HCT116 (cell line): ENCODE measurements at regions of chr10 and their contacts with region 1.

Region 1: GRCh38 chr10:3239066-3239919 is 66.7 kb upstream of the PITRM1 start:
- DNase-seq: peak; percentile 45
- ATAC-seq: peak; percentile 96
- H3K4me3 ChIP-seq: no peak overlapping the region
- H3K27ac ChIP-seq: no peak overlapping the region
- H3K4me1 ChIP-seq: no peaks in the 10 kb centered on the region
- H3K27me3 ChIP-seq: no peaks in the 10 kb centered on the region
- CTCF ChIP-seq: peak; percentile 46 to 78 (median 70); a peak in 5 of 6 replicates
- POLR2A ChIP-seq: no peak
- RAD21 ChIP-seq: peak; percentile 97

Region 2: DNA sequence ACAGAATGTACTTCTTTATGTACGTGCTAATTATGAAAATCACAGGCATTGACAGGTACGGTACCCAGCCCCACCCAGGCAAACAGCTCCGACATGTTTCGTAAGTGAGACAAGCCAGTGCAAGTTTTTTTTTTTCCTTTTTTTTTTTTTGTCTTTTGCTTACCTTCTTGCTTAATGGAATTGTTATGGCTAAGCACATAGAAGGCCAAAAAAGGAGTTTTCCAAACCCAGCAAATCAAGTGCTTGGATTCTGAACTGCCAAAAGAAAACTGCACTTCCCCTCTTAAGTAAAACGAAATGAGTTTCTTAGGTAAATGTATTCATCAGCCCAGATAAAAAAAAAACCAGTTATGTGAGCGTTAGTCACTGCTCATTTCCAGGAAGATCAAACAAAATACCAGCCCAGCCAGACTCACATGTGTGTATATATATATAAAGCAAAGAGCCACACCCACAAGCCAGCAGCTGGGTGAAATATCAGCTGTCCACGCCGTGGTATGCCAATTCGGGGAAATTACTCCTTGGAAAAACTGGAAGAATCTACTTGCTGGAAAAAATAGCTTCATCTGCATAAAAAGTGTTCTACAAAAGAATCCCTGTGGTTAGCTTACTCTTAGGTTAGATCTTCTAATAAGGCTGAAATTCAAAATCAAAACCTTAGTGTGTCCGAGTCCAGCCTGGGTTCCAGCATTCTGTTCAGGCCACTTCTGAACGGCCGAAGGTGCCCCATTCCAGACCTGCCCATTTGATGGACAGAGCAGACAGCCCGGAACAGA is 537.7 kb after region 1 on chr10:
- CTCF ChIA-PET with region 1: no interaction called
- POLR2A ChIA-PET with region 1: no interaction called
- RAD21 ChIA-PET with region 1: no interaction called
- intact Hi-C with region 1: loop called (anchors 5 kb)
- DNase-seq: peak; percentile 59
- ATAC-seq: peak; percentile 28; the same call in 1 of the 2 replicates
- H3K4me3 ChIP-seq: no peak overlapping the region
- H3K27ac ChIP-seq: peak overlapping the region; percentile 56
- H3K4me1 ChIP-seq: peaks cover 63 to 74% of the 10 kb centered on the region in 2 experiments
- H3K27me3 ChIP-seq: no peaks in the 10 kb centered on the region
- CTCF ChIP-seq: no peak
- POLR2A ChIP-seq: no peak
- RAD21 ChIP-seq: 0 out of 2 replicates have a peak, but pooled peaks have one; percentile 13

Region 3: DNA sequence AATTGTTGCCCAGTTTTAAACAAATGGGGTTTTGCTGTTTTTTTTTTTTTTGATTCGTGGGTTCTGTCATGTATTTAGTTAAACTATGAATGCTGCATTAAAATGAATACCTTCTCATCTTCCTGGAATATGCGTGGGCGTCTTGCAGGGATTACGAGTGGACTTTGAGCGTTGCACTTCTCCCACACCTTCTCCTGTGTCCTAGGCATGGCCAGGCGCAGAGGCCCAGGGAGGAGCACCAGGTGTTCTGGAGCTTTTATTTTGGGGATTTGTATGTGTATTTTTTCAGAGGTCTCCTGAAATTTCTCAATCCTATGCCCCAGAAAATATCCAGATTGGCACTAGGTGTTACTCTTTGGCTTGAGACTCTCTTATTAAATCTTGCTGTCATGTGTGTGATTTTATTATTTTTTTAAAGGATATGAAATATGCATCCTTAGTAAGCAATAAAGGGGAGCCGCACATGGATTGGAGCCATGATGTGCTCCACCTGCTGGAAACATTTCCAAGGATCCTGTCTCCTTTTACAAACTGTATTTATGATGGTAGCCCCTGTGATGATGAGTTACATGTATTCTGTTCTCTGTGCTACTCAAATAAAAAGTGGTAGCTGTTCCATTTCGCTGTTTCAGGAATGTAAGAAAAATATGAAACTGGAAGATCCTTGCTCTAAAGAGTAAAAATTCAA is 1027.9 kb after region 1 on chr10:
- CTCF ChIA-PET with region 1: no interaction called
- POLR2A ChIA-PET with region 1: no interaction called
- RAD21 ChIA-PET with region 1: no interaction called
- intact Hi-C with region 1: loop called (anchors 5 kb)
- DNase-seq: peak; percentile 21
- ATAC-seq: no peak
- H3K4me3 ChIP-seq: no peak overlapping the region
- H3K27ac ChIP-seq: no peak overlapping the region
- H3K4me1 ChIP-seq: no peaks in the 10 kb centered on the region
- H3K27me3 ChIP-seq: no peaks in the 10 kb centered on the region
- CTCF ChIP-seq: peak; percentile 27 to 44 (median 28); a peak in 4 of 6 replicates
- POLR2A ChIP-seq: no peak
- RAD21 ChIP-seq: peak; percentile 47